Gastrocnemius medialis (tissue), 4 donors: ENCODE measurements at regions of chr21 and their contacts with region 1.

Region 1: GRCh38 chr21:39313571-39314142 is at the start of gene BRWD1:
- DNase-seq: peak; percentile 70 to 75
- ATAC-seq: peak; percentile 73
- H3K4me3 ChIP-seq: peak within 1 kb of the TSS; percentile 87 to 99 (median 96)
- H3K27ac ChIP-seq: peak within 1 kb of the TSS; percentile 91 to 99 (median 98)
- H3K4me1 ChIP-seq: peaks cover 14 to 15% of the 10 kb centered on the region in 2 donors
- H3K27me3 ChIP-seq: no peaks in the 10 kb centered on the region
- CTCF ChIP-seq: peak in 4 of 5 experiments; percentile 38 to 68 (median 52)
- POLR2A ChIP-seq: peak; percentile 77 to 80
- total RNA-seq, gene BRWD1: 42.2 to 65.7 (median 50.4) TPM

Region 2: DNA sequence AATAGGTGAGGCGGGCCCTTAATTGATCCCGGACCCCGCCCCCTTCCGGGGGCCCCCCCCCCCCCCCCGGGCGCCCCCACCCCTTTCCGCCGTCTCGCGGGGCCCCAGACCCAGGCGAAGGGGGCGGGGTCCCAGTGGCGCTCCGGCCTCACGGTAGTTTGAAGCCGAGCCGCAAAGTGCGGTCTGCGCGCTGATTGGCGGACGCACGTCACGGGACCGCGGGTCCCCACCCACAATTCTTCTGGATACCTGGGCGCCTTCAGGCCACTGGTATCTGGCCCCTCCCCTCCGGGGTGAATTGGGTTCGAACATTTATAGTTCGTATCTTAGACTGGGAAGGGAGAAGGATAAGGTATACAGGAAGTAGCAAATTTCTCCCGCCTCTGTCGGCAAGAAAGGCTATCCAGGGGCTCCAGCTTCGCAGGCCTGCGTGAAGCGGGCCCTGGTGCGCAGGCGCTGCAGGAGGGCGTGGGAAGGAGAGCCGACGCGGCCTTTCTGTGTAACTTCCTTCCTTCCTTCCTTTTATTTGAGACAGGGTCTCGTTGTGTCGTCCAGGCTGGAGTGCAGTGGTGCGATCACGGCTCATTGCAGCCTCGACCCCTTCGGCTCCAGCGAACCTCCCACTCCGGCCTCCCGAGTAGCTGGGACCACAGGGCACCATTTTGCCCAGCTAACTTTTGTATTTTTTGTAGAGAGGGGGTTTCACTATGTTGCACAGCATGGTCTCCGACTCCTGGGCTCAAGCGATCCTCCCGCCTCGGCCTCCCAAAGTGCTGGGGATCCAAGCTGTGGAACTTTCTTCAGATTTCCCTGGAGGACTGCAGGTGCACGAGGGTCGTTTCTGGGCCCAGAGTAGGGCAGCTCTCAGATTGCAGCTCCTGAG is 35.8 kb after region 1 on chr21:
- in situ Hi-C with region 1: no loop called
- intact Hi-C with region 1: loop called (anchors 1 kb)
- DNase-seq: peak; percentile 89 to 92
- ATAC-seq: peak; percentile 91 to 95
- H3K4me3 ChIP-seq: peak overlapping the region; percentile 57 to 81 (median 72)
- H3K27ac ChIP-seq: peak overlapping the region; percentile 79 to 87 (median 82)
- H3K4me1 ChIP-seq: peaks cover 15% of the 10 kb centered on the region in 2 donors
- H3K27me3 ChIP-seq: no peaks in the 10 kb centered on the region
- CTCF ChIP-seq: no peak
- POLR2A ChIP-seq: peak in 1 of 2 donors; percentile 8

Region 3: GRCh38 chr21:39379986-39380891 is 66.6 kb after region 1 on chr21:
- in situ Hi-C with region 1: loop called in 3 of 4 experiments (anchors 5 to 10 kb)
- intact Hi-C with region 1: loop called (anchors 2 kb)
- DNase-seq: peak; percentile 86 to 94
- ATAC-seq: peak; percentile 93 to 95
- H3K4me3 ChIP-seq: peak overlapping the region; percentile 64 to 90 (median 78)
- H3K27ac ChIP-seq: peak overlapping the region; percentile 82 to 91 (median 86)
- H3K4me1 ChIP-seq: peaks cover 9 to 13% of the 10 kb centered on the region in 2 donors
- H3K27me3 ChIP-seq: no peaks in the 10 kb centered on the region
- CTCF ChIP-seq: no peak
- POLR2A ChIP-seq: peak; percentile 51 to 64

Region 4: GRCh38 chr21:39388038-39388810 is 74.6 kb after region 1 on chr21:
- in situ Hi-C with region 1: loop called in 3 of 4 experiments (anchors 5 to 10 kb)
- intact Hi-C with region 1: loop called (anchors 1 kb)
- DNase-seq: peak; percentile 74 to 85
- ATAC-seq: peak; percentile 63 to 70
- H3K4me3 ChIP-seq: peak overlapping the region; percentile 50 to 69 (median 61)
- H3K27ac ChIP-seq: peak overlapping the region; percentile 79 to 86 (median 83)
- H3K4me1 ChIP-seq: peaks cover 14 to 26% of the 10 kb centered on the region in 2 donors
- H3K27me3 ChIP-seq: no peaks in the 10 kb centered on the region
- CTCF ChIP-seq: peak; percentile 73 to 97 (median 91)
- POLR2A ChIP-seq: no peak

Region 5: GRCh38 chr21:39451332-39452206 is 137.9 kb after region 1 on chr21 and contains the start of gene SH3BGR:
- in situ Hi-C with region 1: no loop called
- intact Hi-C with region 1: loop called (anchors 5 kb)
- DNase-seq: peak; percentile 90 to 94
- ATAC-seq: peak; percentile 88
- H3K4me3 ChIP-seq: peak within 1 kb of the TSS; percentile 57 to 68 (median 64)
- H3K27ac ChIP-seq: peak within 1 kb of the TSS; percentile 88 to 95 (median 90)
- H3K4me1 ChIP-seq: peaks cover 28 to 43% of the 10 kb centered on the region in 2 donors
- H3K27me3 ChIP-seq: no peaks in the 10 kb centered on the region
- CTCF ChIP-seq: no peak
- POLR2A ChIP-seq: peak; percentile 72 to 90
- total RNA-seq, gene SH3BGR: 92.9 to 182 (median 149) TPM

Region 6: DNA sequence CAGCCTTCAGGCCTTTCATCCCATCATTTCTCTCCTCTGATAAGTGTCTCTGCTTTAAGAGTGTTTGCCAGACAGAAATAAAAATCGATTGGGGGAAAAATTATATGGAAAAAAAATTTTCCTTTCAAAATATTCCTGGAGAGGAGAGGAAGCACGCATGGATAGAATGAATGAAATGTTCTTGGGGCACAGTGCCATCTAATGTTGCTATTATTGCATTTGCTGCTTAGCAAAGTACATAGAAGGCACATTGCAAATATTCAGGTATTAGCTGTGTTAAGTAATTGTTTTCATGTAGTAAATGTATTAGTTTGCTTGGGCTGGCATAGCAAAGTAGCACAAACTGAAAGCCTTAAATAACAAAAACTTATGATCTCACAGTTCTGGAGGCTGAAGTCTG is 317.2 kb after region 1 on chr21:
- in situ Hi-C with region 1: no loop called
- intact Hi-C with region 1: no loop called
- DNase-seq: no peak
- ATAC-seq: no peak
- H3K4me3 ChIP-seq: no peak overlapping the region
- H3K27ac ChIP-seq: no peak overlapping the region
- H3K4me1 ChIP-seq: no peaks in the 10 kb centered on the region
- H3K27me3 ChIP-seq: no peaks in the 10 kb centered on the region
- CTCF ChIP-seq: no peak
- POLR2A ChIP-seq: no peak